ENCODE measurements at regions of chr3 and their contacts with region 1.

Region 1: DNA sequence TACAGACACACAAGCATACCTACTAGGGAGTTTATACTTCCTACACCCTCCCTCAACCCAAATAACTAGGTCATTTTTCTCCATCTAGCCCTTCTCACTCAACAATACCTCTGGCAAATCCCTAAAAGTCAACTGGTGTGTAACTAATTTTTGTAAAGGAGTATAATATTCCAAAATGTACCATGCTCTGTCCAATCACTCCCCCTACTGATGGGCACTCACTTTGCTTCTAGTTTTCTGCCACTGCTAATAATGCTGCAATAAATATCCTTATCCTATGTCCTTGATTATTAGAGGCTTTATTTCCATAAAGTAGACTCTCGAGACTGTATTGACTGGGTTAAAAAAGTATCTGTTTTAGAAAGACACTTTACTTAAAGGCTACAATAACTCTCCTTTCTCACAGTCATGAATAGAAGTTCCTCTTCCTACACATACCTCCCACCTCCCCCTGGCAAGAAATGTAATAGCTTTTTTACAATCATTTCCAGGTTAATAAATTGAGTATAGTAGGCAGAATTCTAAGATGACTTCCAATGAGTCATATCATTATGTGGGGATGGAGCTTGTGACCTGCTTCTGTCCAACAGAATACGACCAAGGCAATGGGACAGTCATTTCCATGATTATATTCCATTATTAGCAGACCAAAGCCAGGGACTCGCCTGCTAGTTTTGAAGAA is 30.0 kb downstream of the SHQ1 start:
- DNase-seq: peak in 1 of 9 donors; percentile 4
- ATAC-seq: no peak
- H3K4me3 ChIP-seq: no peak overlapping the region
- H3K4me3 Mint-ChIP-seq: no peak overlapping the region
- H3K27ac ChIP-seq: no peak overlapping the region
- H3K27ac Mint-ChIP-seq: peak overlapping the region in 2 of 9 donors; percentile 14 to 56
- H3K4me1 ChIP-seq: peaks cover 0 to 25% of the 10 kb centered on the region in 2 donors
- H3K4me1 Mint-ChIP-seq: peaks cover 0 to 14% (median 8%) of the 10 kb centered on the region in 7 donors
- H3K27me3 ChIP-seq: no peaks in the 10 kb centered on the region
- H3K27me3 Mint-ChIP-seq: no peaks in the 10 kb centered on the region

Region 2: DNA sequence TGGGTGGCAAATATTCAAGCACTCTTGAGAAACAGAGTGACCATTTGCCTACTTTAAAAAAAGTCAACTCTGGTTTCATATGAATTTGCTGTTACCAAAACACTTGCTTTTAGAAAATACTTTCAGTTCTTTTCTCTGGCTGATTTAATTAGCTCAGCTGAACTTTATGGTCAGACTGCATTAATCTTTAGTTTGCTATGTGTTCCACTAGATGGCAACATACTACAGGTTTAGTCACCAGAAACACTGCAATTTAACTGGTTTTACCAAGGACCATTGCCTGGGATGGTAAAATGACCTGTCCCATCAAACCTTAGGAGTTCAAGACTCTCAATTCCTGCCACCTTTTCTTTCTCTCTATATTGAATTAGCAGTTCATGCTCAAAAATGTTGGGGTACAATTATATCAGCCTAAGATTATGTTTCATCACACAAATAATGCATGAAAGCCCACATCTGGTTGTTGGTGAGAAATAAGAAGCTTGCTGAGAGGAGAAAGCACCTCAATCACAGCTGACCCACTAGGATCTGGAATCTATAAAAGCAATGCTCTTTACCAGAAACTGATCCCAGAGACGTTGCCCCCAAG is 1107.2 kb before region 1 on chr3:
- CTCF ChIA-PET with region 1: interaction called, 12 read pairs
- POLR2A ChIA-PET with region 1: interaction called, 4 read pairs
- intact Hi-C with region 1: loop called (anchors 1 to 2 kb)
- DNase-seq: peak in 7 of 9 donors; percentile 32 to 57 (median 40)
- ATAC-seq: peak; percentile 81
- H3K4me3 ChIP-seq: no peak overlapping the region
- H3K4me3 Mint-ChIP-seq: peak overlapping the region in 5 of 10 donors; percentile 6 to 48 (median 32)
- H3K27ac ChIP-seq: no peak overlapping the region
- H3K27ac Mint-ChIP-seq: peak overlapping the region in 8 of 9 donors; percentile 4 to 80 (median 62)
- H3K4me1 ChIP-seq: peaks cover 19 to 29% of the 10 kb centered on the region in 2 donors
- H3K4me1 Mint-ChIP-seq: peaks cover 40 to 91% (median 53%) of the 10 kb centered on the region in 7 donors
- H3K27me3 ChIP-seq: no peaks in the 10 kb centered on the region
- H3K27me3 Mint-ChIP-seq: no peaks in the 10 kb centered on the region

Region 3: GRCh38 chr3:71926262-71926600 is 892.0 kb before region 1 on chr3:
- CTCF ChIA-PET with region 1: interaction called, 6 read pairs
- POLR2A ChIA-PET with region 1: no interaction called
- intact Hi-C with region 1: loop called (anchors 1 kb)
- DNase-seq: peak in 4 of 9 donors; percentile 10 to 35 (median 15)
- ATAC-seq: no peak
- H3K4me3 ChIP-seq: no peak overlapping the region
- H3K4me3 Mint-ChIP-seq: no peak overlapping the region
- H3K27ac ChIP-seq: no peak overlapping the region
- H3K27ac Mint-ChIP-seq: peak overlapping the region in 1 of 9 donors; percentile 18
- H3K4me1 ChIP-seq: no peaks in the 10 kb centered on the region
- H3K4me1 Mint-ChIP-seq: peaks cover 0 to 5% (median 0%) of the 10 kb centered on the region in 7 donors
- H3K27me3 ChIP-seq: no peaks in the 10 kb centered on the region
- H3K27me3 Mint-ChIP-seq: peaks cover 0 to 4% (median 0%) of the 10 kb centered on the region in 5 donors

Region 4: GRCh38 chr3:72100601-72101187 is 717.5 kb before region 1 on chr3:
- CTCF ChIA-PET with region 1: no interaction called
- POLR2A ChIA-PET with region 1: no interaction called
- intact Hi-C with region 1: loop called in 1 of 2 experiments (anchors 5 kb)
- DNase-seq: peak; percentile 83 to 94 (median 90)
- ATAC-seq: peak; percentile 89
- H3K4me3 ChIP-seq: peak overlapping the region; percentile 56
- H3K4me3 Mint-ChIP-seq: peak overlapping the region; percentile 77 to 88 (median 83)
- H3K27ac ChIP-seq: peak overlapping the region; percentile 37
- H3K27ac Mint-ChIP-seq: peak overlapping the region; percentile 28 to 96 (median 83)
- H3K4me1 ChIP-seq: peaks cover 3 to 19% of the 10 kb centered on the region in 2 donors
- H3K4me1 Mint-ChIP-seq: peaks cover 24 to 38% (median 26%) of the 10 kb centered on the region in 7 donors
- H3K27me3 ChIP-seq: peaks cover 0 to 3% of the 10 kb centered on the region in 2 donors
- H3K27me3 Mint-ChIP-seq: peaks cover 0 to 7% (median 0%) of the 10 kb centered on the region in 5 donors

Region 5: DNA sequence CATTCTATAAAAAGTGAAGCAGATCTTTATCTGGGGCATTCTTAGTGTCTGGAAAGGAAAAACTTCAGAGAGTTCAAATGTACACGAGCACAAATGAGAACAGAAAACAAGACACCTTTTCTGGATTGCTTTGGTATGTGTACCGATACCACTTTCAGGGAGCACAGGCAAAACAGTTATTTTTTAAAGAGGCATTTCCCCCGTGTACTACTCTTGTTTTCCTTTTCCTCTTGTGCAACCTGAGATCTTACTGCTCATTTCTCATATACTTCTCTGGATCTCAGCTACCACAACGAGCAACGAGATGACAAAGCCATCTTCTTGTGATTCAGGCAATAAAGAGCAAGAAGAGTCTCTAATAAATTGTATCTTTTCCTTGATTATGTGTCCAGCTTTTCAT is 433.6 kb before region 1 on chr3:
- CTCF ChIA-PET with region 1: no interaction called
- POLR2A ChIA-PET with region 1: no interaction called
- intact Hi-C with region 1: loop called in 1 of 2 experiments (anchors 5 kb)
- DNase-seq: no peak
- ATAC-seq: no peak
- H3K4me3 ChIP-seq: no peak overlapping the region
- H3K4me3 Mint-ChIP-seq: peak overlapping the region in 5 of 10 donors; percentile 5 to 53 (median 38)
- H3K27ac ChIP-seq: no peak overlapping the region
- H3K27ac Mint-ChIP-seq: peak overlapping the region in 7 of 9 donors; percentile 18 to 76 (median 51)
- H3K4me1 ChIP-seq: peaks cover 0 to 30% of the 10 kb centered on the region in 2 donors
- H3K4me1 Mint-ChIP-seq: peaks cover 54 to 100% (median 77%) of the 10 kb centered on the region in 7 donors
- H3K27me3 ChIP-seq: no peaks in the 10 kb centered on the region
- H3K27me3 Mint-ChIP-seq: no peaks in the 10 kb centered on the region

Region 6: DNA sequence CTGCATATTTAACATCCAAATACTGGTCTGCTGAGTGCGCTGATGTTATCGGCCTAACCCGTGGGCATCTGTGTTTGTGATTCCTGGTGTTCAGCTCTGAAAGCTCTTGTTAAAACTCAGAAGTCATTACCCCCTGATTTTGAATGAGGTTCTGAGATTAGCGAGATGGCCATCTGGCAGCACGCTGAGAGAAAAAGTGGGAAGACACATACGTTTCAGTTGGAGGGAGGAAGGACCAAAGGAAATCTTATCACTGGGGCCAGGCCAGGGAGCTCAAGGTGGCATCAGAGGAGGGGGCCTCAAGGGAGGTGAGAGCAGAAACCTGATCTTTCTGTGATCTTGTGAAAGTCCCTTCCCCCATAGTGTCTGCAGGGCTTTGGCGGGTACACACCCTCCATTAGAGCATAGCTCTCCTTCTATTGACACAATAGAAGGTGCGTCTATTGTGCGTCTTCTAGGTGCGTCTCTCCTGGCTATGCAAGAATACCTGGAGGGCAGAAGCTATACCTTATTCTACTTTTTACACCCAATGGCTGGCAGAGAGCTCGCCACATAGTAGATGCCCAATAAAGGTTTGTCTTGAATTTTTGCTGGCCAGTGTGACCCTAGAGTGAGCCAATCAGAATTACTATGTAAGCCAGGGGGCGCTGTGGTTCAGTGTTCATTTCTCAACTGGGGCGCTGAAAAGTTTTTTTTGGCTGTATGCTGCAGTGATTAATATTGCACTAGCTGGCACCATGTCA is 152.4 kb before region 1 on chr3:
- CTCF ChIA-PET with region 1: interaction called, 242 read pairs
- POLR2A ChIA-PET with region 1: interaction called, 32 read pairs
- intact Hi-C with region 1: loop called (anchors 1 kb)
- DNase-seq: peak; percentile 34 to 80 (median 59)
- ATAC-seq: peak; percentile 73
- H3K4me3 ChIP-seq: no peak overlapping the region
- H3K4me3 Mint-ChIP-seq: no peak overlapping the region
- H3K27ac ChIP-seq: no peak overlapping the region
- H3K27ac Mint-ChIP-seq: peak overlapping the region in 1 of 9 donors; percentile 59
- H3K4me1 ChIP-seq: peaks cover 0 to 4% of the 10 kb centered on the region in 2 donors
- H3K4me1 Mint-ChIP-seq: no peaks in the 10 kb centered on the region
- H3K27me3 ChIP-seq: no peaks in the 10 kb centered on the region
- H3K27me3 Mint-ChIP-seq: no peaks in the 10 kb centered on the region

Region 7: GRCh38 chr3:72756900-72757299 is 61.3 kb before region 1 on chr3:
- CTCF ChIA-PET with region 1: interaction called, 10 read pairs
- POLR2A ChIA-PET with region 1: interaction called, 11 read pairs
- intact Hi-C with region 1: loop called (anchors 1 kb)
- DNase-seq: peak in 8 of 9 donors; percentile 24 to 87 (median 83)
- ATAC-seq: peak; percentile 98
- H3K4me3 ChIP-seq: peak overlapping the region; percentile 37
- H3K4me3 Mint-ChIP-seq: peak overlapping the region; percentile 51 to 84 (median 76)
- H3K27ac ChIP-seq: peak overlapping the region; percentile 68
- H3K27ac Mint-ChIP-seq: peak overlapping the region; percentile 86 to 99 (median 97)
- H3K4me1 ChIP-seq: peaks cover 17 to 49% of the 10 kb centered on the region in 2 donors
- H3K4me1 Mint-ChIP-seq: peaks cover 28 to 89% (median 80%) of the 10 kb centered on the region in 7 donors
- H3K27me3 ChIP-seq: no peaks in the 10 kb centered on the region
- H3K27me3 Mint-ChIP-seq: no peaks in the 10 kb centered on the region

Measured in naive thymus-derived CD4-positive, alpha-beta T cell (primary cell).